Left cardiac atrium (tissue), 4 donors: ENCODE measurements at regions of chr4 and their contacts with region 1.

Region 1: DNA sequence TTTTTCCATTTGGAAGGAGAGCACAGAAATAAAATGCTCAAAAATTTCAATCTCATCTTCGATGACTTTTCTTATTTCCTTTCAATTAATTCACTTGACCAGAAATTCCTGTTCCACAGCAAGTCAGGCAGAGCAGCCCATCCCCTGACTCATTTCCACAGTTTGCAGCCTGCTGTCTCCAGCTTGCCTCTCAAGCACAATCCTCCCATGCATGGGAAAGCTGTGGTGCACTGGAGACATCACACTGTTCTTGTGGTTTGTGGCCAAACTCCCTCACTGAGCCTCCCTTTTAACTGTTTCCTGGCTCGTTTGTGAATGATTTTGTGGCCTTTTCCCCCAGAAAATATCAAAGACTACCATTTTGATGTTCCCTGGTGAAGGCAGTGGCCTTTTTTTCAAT is 114.0 kb upstream of the ENPEP start:
- DNase-seq: no peak
- ATAC-seq: no peak

Region 2: DNA sequence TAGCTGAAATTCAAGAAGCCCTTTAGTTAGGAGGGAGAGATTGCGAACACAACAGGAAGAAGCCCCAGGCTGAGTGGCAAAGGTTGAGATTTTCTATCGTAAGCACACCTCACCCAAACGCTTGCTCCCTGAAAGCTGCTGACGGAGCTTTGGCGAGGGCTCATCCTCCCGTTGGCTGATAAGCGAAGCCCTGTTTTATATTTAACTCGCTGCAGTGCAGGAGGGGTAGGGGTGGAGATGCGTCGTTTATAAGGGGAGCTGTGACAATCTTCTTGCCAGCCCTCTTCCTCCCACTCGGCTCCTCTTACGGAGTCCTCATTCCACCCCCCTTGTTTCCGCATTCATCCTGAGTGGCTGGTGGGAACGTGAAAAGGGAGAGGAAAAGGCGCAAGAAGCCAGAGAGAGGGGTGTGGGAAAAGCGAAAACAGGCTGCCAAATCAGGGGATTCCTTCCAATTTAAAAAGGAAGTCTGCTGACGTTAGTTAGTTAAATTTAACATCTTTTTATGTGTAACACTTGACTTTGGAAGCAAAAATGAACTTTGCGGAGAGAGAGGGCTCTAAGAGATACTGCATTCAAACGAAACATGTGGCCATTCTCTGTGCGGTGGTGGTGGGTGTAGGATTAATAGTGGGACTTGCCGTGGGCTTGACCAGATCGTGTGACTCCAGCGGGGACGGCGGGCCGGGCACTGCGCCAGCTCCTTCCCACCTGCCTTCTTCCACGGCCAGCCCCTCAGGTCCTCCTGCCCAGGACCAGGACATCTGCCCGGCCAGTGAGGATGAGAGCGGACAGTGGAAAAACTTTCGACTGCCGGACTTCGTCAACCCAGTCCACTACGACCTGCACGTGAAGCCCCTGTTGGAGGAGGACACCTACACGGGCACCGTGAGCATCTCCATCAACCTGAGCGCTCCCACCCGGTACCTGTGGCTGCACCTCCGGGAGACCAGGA is 114.2 kb after region 1 on chr4 and contains the start of gene ENPEP:
- intact Hi-C with region 1: loop called in 1 of 2 experiments (anchors 10 kb)
- DNase-seq: peak; percentile 58
- ATAC-seq: peak; percentile 89
- total RNA-seq, gene ENPEP: 7.4 to 12.2 TPM